Colonic mucosa (tissue), 4 donors: ENCODE measurements at regions of chr10 and their contacts with region 1.

Region 1: GRCh38 chr10:77641788-77642397 is 4.3 kb upstream of the KCNMA1 start:
- DNase-seq: peak; percentile 82
- H3K4me3 ChIP-seq: no peak overlapping the region
- H3K27ac ChIP-seq: no peak overlapping the region
- H3K4me1 ChIP-seq: no peaks in the 10 kb centered on the region
- H3K27me3 ChIP-seq: peaks cover 27% of the 10 kb centered on the region
- CTCF ChIP-seq: peak; percentile 77

Region 2: DNA sequence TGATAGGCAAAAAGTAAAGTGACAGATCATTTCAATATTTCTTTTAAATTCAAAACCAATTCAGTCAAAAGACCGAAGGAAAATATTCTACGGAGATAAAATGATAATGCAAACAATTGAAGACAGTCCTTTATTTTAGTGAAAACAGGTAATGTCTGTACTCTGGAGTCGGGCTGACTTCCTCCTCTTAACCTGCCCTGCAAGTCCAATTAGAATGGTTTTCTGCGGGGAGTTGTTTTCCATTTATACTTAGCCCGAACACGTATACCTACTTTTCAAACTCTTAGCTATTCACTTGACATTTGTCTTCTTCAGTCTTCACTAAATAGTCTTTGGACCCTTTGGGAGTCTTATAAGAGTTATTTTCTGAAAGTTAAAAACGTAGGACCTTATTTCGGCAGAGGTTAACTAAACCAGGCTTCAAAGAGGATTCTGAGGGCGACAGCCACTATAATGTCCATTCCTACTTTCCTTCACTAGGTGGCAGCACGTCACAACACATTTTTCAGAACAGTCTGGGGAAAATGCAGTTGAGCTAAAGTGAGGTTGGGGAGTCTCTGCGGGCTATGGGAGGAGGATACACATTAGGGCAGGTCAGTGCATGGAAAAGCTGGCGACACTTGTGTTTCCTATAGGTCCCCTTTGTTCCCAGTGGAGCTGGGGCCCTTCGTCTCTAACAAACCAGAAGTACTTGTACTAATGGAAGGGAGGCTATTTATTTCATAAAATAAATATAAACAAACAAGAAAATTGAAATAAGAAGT is 476.3 kb before region 1 on chr10:
- intact Hi-C with region 1: loop called (anchors 2 kb)
- DNase-seq: peak; percentile 75
- H3K4me3 ChIP-seq: no peak overlapping the region
- H3K27ac ChIP-seq: no peak overlapping the region
- H3K4me1 ChIP-seq: no peaks in the 10 kb centered on the region
- H3K27me3 ChIP-seq: no peaks in the 10 kb centered on the region
- CTCF ChIP-seq: peak; percentile 76

Region 3: DNA sequence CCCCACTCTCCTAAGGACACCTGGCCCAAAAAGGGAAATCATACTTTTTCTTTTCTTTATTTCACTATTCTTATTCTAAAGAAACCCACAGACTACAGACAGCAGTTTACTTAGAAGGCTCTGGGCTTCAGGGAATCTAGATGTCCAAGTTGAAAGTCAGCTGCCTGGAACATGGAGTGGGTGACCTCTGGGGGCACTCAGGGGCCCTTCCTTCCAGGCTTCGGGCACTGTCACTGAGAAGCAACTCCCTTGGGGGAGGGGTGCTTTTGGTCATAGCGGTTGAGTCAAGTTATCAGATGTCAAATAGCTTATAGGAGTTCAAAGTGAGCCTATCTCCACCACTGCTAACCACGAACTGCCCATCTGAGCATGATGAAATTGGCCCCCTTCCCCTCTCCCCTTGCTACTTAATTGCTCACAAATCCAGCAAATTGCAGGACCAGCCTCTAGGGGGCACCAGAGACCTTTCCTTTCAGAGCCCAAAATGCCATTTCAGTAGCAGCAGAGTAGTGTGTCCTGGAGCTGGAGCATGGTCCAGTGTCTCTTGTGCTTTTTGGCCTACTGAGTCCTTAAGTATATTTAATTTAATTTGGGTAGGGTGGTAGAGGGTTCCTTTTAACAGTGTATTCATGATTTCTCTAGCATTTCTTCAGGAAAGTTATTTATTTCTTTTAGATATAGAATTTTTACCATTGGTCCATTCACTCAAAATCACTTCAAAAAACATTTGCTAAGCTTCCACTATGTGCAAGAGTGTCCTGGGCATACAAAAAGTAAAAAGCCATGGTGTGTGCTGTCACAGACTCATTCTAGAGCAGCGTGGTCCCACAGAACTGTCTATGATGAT is 468.1 kb before region 1 on chr10:
- intact Hi-C with region 1: loop called (anchors 2 kb)
- DNase-seq: peak; percentile 79
- H3K4me3 ChIP-seq: no peak overlapping the region
- H3K27ac ChIP-seq: no peak overlapping the region
- H3K4me1 ChIP-seq: no peaks in the 10 kb centered on the region
- H3K27me3 ChIP-seq: no peaks in the 10 kb centered on the region
- CTCF ChIP-seq: peak; percentile 89

Region 4: DNA sequence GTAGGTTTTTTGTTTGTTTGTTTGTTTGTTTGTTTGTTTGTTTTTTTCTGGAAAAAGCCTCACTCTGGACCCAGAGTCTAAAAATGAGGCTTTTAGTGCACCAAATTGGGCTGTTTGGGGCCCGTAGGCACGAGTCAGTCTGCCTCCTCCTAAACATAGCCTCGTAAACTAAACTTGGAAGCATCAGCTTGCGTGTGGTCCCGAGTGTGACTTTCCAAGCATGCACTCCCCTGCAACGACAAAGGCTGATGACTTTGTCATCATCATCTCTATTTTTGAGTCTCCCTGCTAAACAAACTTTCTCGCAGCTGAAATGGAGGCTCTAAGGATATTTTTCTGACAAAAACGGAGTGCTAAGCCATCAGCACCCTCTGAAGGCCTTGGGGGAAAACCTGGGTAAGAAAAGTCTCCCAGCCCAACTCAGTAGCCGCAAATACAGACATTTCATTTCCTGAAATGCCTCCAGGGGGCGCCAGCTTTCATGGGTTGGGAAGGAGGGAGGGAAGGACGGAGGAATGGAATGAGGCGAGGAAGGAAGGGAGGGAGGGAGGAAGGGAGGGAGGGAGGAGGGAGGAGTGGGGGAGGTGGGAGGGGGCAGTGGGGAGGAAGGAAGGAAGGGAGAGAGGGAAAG is 250.2 kb before region 1 on chr10:
- intact Hi-C with region 1: loop called (anchors 2 kb)
- DNase-seq: peak; percentile 85
- H3K4me3 ChIP-seq: no peak overlapping the region
- H3K27ac ChIP-seq: no peak overlapping the region
- H3K4me1 ChIP-seq: no peaks in the 10 kb centered on the region
- H3K27me3 ChIP-seq: no peaks in the 10 kb centered on the region
- CTCF ChIP-seq: peak; percentile 28

Region 5: DNA sequence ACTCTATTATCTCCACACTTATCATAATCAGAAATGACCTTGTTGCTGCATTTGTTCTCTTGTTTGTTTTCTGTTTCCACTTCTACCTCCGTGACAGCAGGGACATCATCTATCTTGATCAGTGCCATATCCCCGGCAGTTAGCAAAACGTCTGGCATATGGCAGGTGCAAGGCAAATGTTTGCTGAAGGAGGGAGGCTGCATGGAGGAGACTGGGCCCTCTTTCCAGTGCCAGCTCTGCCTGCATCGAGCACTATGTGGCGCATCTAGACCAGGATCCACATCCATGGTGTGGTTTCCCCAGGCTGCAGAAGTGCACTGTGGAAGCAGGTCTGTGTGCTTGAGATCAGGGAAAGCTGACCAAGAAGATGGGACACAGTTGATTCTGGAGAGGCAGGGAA is 185.5 kb before region 1 on chr10:
- intact Hi-C with region 1: loop called (anchors 5 kb)
- DNase-seq: peak; percentile 58
- H3K4me3 ChIP-seq: no peak overlapping the region
- H3K27ac ChIP-seq: no peak overlapping the region
- H3K4me1 ChIP-seq: no peaks in the 10 kb centered on the region
- H3K27me3 ChIP-seq: no peaks in the 10 kb centered on the region
- CTCF ChIP-seq: peak; percentile 20